Activated naive CD4-positive, alpha-beta T cell treated with anti-CD3 and anti-CD28 coated beads, Interleukin-2, amount 10 ng/mL, durations not matched to agents 7 days and 5 days (primary cell): ENCODE measurements at regions of chr1 and their contacts with region 1.

Region 1: GRCh38 chr1:74771913-74772515 is 39.1 kb downstream of the TYW3 start:
- DNase-seq: no peak
- H3K4me3 Mint-ChIP-seq: no peak overlapping the region
- H3K27ac Mint-ChIP-seq: no peak overlapping the region
- H3K4me1 Mint-ChIP-seq: no peaks in the 10 kb centered on the region
- H3K27me3 Mint-ChIP-seq: no peaks in the 10 kb centered on the region

Region 2: DNA sequence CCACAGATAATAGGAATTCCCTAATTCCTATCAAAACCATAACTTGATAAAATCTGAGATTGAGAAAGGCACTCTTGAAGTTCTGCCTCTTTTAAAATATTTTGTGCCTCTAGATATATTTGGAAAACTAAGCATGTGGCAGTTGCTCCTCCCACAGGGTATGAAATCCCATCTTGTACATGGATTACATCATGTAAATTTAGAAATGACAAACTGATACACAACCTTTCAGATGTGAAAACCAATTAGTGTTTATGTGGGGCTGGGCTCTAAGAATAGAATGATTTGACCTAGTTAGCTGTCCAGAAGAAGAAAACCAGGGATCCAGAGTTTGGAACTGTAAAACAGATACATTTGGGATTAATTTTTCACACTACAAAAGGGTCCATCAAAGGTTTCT is 275.3 kb before region 1 on chr1:
- CTCF ChIA-PET with region 1: no interaction called
- DNase-seq: no peak
- H3K4me3 Mint-ChIP-seq: no peak overlapping the region
- H3K27ac Mint-ChIP-seq: no peak overlapping the region
- H3K4me1 Mint-ChIP-seq: no peaks in the 10 kb centered on the region
- H3K27me3 Mint-ChIP-seq: no peaks in the 10 kb centered on the region

Region 3: GRCh38 chr1:74714429-74715235 is 57.4 kb before region 1 on chr1:
- CTCF ChIA-PET with region 1: no interaction called
- DNase-seq: no peak
- H3K4me3 Mint-ChIP-seq: no peak overlapping the region
- H3K27ac Mint-ChIP-seq: no peak overlapping the region
- H3K4me1 Mint-ChIP-seq: no peaks in the 10 kb centered on the region
- H3K27me3 Mint-ChIP-seq: no peaks in the 10 kb centered on the region

Region 4: DNA sequence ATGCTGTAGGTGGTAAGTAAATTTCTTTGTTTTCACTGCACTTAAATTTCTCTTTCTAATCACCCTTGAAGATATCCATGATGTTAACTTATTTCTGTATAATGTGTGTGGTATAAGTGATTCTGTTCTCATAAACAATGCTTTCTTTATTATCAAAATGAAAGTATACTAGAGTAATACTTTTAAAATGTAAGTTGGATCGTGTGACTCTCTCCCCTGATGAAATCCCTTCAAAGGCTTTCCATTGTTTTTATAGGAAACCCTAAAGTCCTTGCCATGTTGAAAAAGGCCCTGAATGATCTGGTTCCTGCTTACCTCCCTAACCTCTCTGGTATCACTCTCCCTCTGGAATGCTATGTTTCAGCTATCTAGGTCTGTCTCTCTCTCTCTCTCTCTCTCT is 171.0 kb after region 1 on chr1:
- CTCF ChIA-PET with region 1: no interaction called
- DNase-seq: no peak
- H3K4me3 Mint-ChIP-seq: no peak overlapping the region
- H3K27ac Mint-ChIP-seq: no peak overlapping the region
- H3K4me1 Mint-ChIP-seq: no peaks in the 10 kb centered on the region
- H3K27me3 Mint-ChIP-seq: no peaks in the 10 kb centered on the region

Region 5: DNA sequence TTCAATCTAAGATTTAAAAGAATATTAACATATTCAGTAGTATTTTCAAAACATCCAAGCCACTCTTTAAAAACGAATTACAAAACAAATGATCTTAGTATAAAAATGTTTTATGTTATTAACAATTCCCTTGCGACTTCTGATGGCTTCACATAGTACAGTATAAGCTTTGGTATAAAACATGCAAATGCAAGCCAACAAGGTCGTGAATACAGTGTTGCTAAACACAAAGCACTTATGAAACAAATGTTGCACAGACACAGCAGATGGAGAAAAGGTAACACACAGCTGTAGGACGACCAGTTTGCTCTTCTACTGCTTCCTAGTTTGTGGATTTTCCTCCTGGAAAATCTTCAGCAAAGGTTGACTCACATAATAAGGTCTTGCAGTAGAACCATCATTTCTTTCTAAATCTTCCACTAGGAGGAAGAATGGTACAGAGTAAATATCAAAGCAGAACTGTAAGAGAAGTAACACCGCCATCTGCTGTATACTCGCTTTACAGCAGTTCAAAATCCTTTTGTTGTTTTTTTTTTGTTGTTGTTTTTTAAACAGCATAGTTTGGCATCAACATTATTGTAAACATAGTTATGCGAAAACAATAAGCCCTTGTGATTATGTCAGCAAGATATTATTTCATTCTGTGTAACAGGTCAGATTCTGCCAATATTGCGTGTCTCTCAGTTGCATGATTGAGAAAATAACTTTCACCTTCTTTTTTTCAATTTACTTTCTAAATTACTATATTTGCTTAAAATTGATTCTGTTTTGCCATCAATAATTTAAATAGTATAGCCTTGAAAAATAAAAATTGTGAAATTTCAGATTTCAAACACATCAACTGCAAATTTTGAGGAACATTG is 431.6 kb after region 1 on chr1:
- CTCF ChIA-PET with region 1: interaction called, 12 read pairs
- DNase-seq: no peak
- H3K4me3 Mint-ChIP-seq: no peak overlapping the region
- H3K27ac Mint-ChIP-seq: no peak overlapping the region
- H3K4me1 Mint-ChIP-seq: no peaks in the 10 kb centered on the region
- H3K27me3 Mint-ChIP-seq: no peaks in the 10 kb centered on the region